AG04450 (cell line): ENCODE measurements at regions of chr7 and their contacts with region 1.

Region 1: DNA sequence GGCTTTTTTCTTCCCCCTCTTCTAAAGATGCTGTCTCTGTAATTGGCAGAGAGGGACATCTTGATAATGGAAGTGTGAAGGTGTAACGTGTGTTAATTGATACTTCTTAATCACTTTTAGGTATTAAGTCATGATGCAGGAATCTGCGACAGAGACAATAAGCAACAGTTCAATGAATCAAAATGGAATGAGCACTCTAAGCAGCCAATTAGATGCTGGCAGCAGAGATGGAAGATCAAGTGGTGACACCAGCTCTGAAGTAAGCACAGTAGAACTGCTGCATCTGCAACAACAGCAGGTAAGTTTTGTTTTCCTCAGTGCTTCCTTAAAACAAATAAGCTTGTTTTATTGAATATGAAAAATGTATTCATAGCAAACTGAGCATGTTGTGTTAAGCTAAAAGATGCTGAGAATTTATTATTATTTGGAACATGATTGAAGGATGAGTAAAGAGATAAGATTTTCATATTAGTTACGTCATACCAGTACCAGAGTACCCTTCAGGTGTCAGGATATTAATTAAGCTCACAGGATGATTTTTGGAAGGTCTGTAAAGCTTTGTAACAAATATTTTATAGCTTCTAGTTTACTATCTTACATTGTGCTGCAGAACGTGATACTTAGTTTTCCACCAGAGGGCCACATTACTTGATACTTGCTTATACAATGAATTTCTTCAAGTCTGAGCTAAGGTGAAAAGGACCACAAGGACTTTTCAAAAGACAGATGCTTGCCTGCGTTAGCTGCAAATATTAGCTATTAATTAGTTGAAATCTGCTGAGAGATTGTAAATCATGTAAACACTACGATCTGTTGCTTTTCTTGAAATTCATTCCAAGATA is 12.0 kb downstream of the FOXP2 start:
- DNase-seq: no peak
- H3K4me3 ChIP-seq: no peak overlapping the region
- H3K27ac ChIP-seq: no peak overlapping the region
- H3K27me3 ChIP-seq: no peaks in the 10 kb centered on the region
- CTCF ChIP-seq: peak; percentile 55

Region 2: DNA sequence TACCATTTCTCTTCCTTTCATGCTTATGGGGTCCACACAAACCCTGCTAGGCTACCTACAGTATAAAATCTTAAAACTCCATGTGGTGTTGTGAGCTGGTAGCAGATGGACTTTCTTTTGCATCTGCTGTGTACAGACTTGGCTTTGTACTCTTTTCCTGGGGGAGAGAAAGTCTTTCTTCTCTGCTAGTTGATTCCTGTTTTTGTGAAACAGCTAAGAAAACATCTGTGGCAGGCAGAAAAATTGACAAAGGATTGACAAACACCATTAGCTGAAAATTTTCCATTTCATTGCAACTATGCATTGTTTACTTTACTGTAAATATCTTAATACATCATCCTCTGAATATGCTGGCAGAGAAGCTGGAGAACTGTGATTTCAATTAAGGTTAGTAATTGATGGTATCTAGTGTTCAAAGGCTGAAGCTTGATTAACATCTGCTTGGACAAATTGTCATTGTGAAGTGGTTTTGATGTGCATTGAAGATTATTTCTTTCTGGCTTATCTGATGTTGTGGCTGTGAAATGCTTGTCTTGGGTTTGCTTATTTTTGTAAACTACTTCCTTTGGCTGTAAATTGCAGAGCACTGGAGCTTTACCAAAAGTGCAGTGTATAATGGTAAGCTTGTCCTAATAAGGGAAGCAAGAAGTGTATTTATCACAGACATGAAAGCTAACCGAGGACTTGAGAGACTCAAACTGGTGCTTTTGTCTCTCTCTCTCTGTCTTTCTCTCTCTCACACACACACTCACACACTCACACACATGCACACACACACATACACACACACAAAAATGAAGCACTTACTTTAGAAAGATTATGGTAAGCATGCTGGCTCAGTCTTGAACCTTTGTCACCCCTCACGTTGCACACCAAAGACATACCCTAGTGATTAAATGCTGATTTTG is 12.2 kb before region 1 on chr7 and contains the start of gene FOXP2:
- CTCF ChIA-PET with region 1: interaction called, 38 read pairs
- POLR2A ChIA-PET with region 1: no interaction called
- DNase-seq: no peak
- H3K4me3 ChIP-seq: peak within 1 kb of the TSS; percentile 46
- H3K27ac ChIP-seq: no peak within 1 kb of the TSS
- H3K27me3 ChIP-seq: no peaks in the 10 kb centered on the region
- CTCF ChIP-seq: no peak
- polyA plus RNA-seq, gene FOXP2: 2.8 TPM in 2 replicates

Region 3: GRCh38 chr7:114444196-114444595 is 17.6 kb after region 1 on chr7:
- CTCF ChIA-PET with region 1: interaction called, 13 read pairs
- POLR2A ChIA-PET with region 1: no interaction called
- DNase-seq: no peak
- H3K4me3 ChIP-seq: no peak overlapping the region
- H3K27ac ChIP-seq: no peak overlapping the region
- H3K27me3 ChIP-seq: no peaks in the 10 kb centered on the region
- CTCF ChIP-seq: no peak

Region 4: DNA sequence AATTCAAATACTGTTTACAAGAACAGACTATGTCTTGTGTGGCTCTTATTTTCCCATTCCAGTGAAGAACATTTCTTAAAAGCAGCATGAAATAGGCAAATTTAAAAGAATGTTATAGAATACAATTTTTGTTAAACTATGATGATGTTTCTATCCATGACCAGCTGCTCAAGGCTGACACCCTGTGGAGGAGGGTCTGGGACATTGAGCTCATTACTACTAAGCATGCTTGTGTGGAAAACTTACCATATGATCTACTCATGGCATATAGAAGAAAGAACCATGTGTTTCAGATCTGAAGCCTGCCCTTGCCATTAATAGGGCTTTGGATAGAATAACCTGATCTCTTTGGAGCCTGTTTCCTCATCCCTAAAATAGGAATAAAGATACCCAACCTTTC is 113.0 kb after region 1 on chr7:
- CTCF ChIA-PET with region 1: interaction called, 40 read pairs
- POLR2A ChIA-PET with region 1: no interaction called
- DNase-seq: no peak
- H3K4me3 ChIP-seq: no peak overlapping the region
- H3K27ac ChIP-seq: no peak overlapping the region
- H3K27me3 ChIP-seq: no peaks in the 10 kb centered on the region
- CTCF ChIP-seq: peak; percentile 68

Region 5: DNA sequence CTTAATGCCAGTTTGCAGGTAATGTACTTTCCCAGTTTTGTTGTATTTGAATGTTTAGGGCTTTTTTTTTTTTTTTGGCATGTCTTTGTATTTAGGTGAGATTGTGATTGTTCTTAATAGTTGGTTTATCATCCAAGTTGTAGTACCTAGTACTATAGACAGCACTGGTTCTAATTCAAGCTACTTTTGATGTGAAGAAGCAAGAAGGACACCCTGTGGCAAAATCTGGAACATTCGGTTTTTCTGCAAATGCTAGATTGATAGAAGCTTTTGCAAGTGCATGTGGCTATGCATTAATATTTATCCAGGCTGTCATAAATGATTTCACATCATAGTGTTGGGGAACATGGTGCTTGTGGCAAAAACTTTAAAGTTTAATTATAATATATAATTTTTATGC is 236.9 kb after region 1 on chr7:
- CTCF ChIA-PET with region 1: interaction called, 25 read pairs
- POLR2A ChIA-PET with region 1: no interaction called
- DNase-seq: peak; percentile 2
- H3K4me3 ChIP-seq: no peak overlapping the region
- H3K27ac ChIP-seq: no peak overlapping the region
- H3K27me3 ChIP-seq: no peaks in the 10 kb centered on the region
- CTCF ChIP-seq: peak; percentile 47